ENCODE measurements at regions of chr7 and their contacts with region 1.

Region 1: DNA sequence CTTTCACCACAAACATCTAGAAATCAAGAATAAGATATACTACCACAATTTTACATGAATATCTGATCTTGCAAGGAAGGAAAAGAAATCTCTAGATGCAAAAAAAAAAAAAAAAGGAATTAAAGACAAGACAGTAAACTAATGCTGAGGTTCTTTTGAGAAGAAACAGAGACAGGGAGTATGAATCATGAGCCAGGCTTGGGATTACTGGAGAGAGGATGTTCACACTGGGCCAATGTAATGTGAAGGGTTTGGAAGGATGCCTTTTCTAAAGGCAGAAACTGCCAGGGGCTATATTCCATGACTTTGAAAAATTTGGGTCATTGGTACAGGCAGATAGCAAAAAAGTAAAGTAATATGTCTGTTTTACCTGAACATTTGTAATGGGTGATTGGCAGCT is 573.0 kb upstream of the IGFBP3 start:
- DNase-seq: no peak
- H3K4me3 ChIP-seq: no peak overlapping the region
- CTCF ChIP-seq: no peak

Region 2: GRCh38 chr7:46534664-46535588 is 40.9 kb after region 1 on chr7:
- in situ Hi-C with region 1: loop called (anchors 5 kb)
- DNase-seq: peak; percentile 84
- H3K4me3 ChIP-seq: no peak overlapping the region
- CTCF ChIP-seq: no peak